ENCODE measurements at regions of chr17 and their contacts with region 1.

Region 1: GRCh38 chr17:48024937-48025906 is 12.4 kb downstream of the COPZ2 start:
- DNase-seq: peak; percentile 97
- ATAC-seq: peak; percentile 89
- H3K4me3 ChIP-seq: peak overlapping the region; percentile 40 to 76 (median 69)
- H3K4me3 Mint-ChIP-seq: peak overlapping the region; percentile 82
- H3K27ac ChIP-seq: peak overlapping the region; percentile 38 to 55
- H3K27ac Mint-ChIP-seq: peak overlapping the region; percentile 87
- H3K4me1 ChIP-seq: peaks cover 32 to 36% of the 10 kb centered on the region in 2 donors
- H3K4me1 Mint-ChIP-seq: peaks cover 35% of the 10 kb centered on the region
- H3K27me3 ChIP-seq: peaks cover 0 to 45% (median 15%) of the 10 kb centered on the region in 4 experiments
- H3K27me3 Mint-ChIP-seq: peaks cover 19% of the 10 kb centered on the region
- CTCF ChIP-seq: peak; percentile 68

Region 2: GRCh38 chr17:47895856-47896671 is 129.2 kb before region 1 on chr17 and contains the start of gene SP2:
- CTCF ChIA-PET with region 1: no interaction called
- POLR2A ChIA-PET with region 1: no interaction called
- intact Hi-C with region 1: loop called (anchors 1 kb)
- DNase-seq: peak; percentile 100
- ATAC-seq: peak; percentile 85
- H3K4me3 ChIP-seq: peak within 1 kb of the TSS; percentile 73 to 97 (median 90)
- H3K4me3 Mint-ChIP-seq: peak within 1 kb of the TSS; percentile 96
- H3K27ac ChIP-seq: peak within 1 kb of the TSS; percentile 94 to 98
- H3K27ac Mint-ChIP-seq: peak within 1 kb of the TSS; percentile 100
- H3K4me1 ChIP-seq: peaks cover 19 to 23% of the 10 kb centered on the region in 2 donors
- H3K4me1 Mint-ChIP-seq: peaks cover 50% of the 10 kb centered on the region
- H3K27me3 ChIP-seq: no peaks in the 10 kb centered on the region
- H3K27me3 Mint-ChIP-seq: no peaks in the 10 kb centered on the region
- CTCF ChIP-seq: no peak
- total RNA-seq, gene SP2: 32.5 and 35.4 TPM in 2 replicates

Region 3: DNA sequence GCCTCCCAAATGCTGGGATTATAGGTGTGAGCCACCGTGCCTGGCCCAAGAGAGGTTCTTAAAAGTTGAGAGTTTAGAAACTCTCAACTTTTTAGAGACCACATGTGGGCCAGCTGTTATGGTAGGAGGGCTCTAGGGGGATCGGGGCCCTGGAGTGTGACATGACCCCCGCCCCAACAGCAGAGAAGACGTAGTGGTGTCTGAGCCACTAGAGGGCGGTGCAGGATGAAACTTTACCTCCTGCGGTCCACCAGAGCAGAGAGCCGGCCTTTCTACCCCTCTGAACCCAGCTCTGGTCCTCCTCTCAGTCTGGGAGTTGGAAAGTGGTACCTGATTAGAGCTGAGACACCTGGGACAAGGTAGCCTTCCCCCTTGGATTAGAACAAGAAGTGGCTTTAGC is 46.9 kb before region 1 on chr17:
- CTCF ChIA-PET with region 1: interaction called, 5 read pairs
- POLR2A ChIA-PET with region 1: no interaction called
- intact Hi-C with region 1: loop called (anchors 2 kb)
- DNase-seq: peak; percentile 67
- ATAC-seq: peak; percentile 88
- H3K4me3 ChIP-seq: no peak overlapping the region
- H3K4me3 Mint-ChIP-seq: no peak overlapping the region
- H3K27ac ChIP-seq: no peak overlapping the region
- H3K27ac Mint-ChIP-seq: no peak overlapping the region
- H3K4me1 ChIP-seq: no peaks in the 10 kb centered on the region
- H3K4me1 Mint-ChIP-seq: peaks cover 2% of the 10 kb centered on the region
- H3K27me3 ChIP-seq: no peaks in the 10 kb centered on the region
- H3K27me3 Mint-ChIP-seq: no peaks in the 10 kb centered on the region
- CTCF ChIP-seq: peak; percentile 77

Region 4: DNA sequence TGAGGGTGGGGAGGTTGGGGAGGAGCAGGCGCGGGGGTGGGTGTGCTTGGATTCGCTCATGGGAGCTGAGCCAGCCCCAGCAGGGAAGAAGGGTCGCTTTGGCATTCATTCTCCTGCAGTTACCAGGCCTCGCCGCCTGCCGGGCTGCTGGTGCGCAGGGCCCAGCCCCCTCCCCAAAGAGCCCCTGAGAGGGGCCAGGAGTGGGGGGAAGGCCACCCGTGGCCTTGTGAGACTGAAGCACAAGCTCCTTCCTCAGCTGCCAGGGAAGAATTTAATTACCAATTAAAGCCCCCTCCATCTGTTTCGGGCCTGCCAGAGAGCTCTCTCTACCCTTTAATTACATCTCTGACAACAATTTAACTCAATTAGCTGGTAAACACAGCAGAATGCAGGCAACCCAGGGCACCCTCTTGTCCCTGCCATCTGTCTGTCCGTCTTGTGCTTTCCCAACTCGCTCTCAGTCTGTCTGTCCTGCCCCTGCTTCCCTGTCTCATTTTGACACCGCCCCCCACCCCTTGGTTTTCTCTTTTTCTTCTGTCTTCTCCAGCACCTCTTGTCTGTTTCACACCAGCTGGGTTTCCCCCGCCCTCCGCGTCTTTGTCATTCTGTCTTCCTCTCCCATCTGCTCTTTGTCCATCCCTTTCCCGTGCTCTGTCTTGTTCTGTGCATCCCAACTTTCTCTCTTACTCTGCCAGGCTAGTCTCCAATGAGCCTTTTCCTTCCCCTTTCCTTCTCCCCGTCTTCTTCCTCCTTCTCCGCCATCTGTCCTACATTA is 21.6 kb before region 1 on chr17:
- CTCF ChIA-PET with region 1: no interaction called
- POLR2A ChIA-PET with region 1: no interaction called
- intact Hi-C with region 1: no loop called
- DNase-seq: no peak
- ATAC-seq: no peak
- H3K4me3 ChIP-seq: no peak overlapping the region
- H3K4me3 Mint-ChIP-seq: no peak overlapping the region
- H3K27ac ChIP-seq: no peak overlapping the region
- H3K27ac Mint-ChIP-seq: no peak overlapping the region
- H3K4me1 ChIP-seq: no peaks in the 10 kb centered on the region
- H3K4me1 Mint-ChIP-seq: peaks cover 4% of the 10 kb centered on the region
- H3K27me3 ChIP-seq: peaks cover 0 to 6% (median under 1%) of the 10 kb centered on the region in 4 experiments
- H3K27me3 Mint-ChIP-seq: peaks cover 17% of the 10 kb centered on the region
- CTCF ChIP-seq: no peak

Region 5: GRCh38 chr17:48047741-48048383 is 22.6 kb after region 1 on chr17 and contains the start of gene NFE2L1:
- CTCF ChIA-PET with region 1: interaction called, 50 read pairs
- POLR2A ChIA-PET with region 1: interaction called, 16 read pairs
- intact Hi-C with region 1: loop called (anchors 1 kb)
- DNase-seq: peak; percentile 98
- ATAC-seq: peak; percentile 94
- H3K4me3 ChIP-seq: peak within 1 kb of the TSS; percentile 63 to 84 (median 78)
- H3K4me3 Mint-ChIP-seq: peak within 1 kb of the TSS; percentile 97
- H3K27ac ChIP-seq: peak within 1 kb of the TSS; percentile 87 to 90
- H3K27ac Mint-ChIP-seq: peak within 1 kb of the TSS; percentile 100
- H3K4me1 ChIP-seq: peaks cover 30 to 35% of the 10 kb centered on the region in 2 donors
- H3K4me1 Mint-ChIP-seq: peaks cover 52% of the 10 kb centered on the region
- H3K27me3 ChIP-seq: no peaks in the 10 kb centered on the region
- H3K27me3 Mint-ChIP-seq: no peaks in the 10 kb centered on the region
- CTCF ChIP-seq: no peak
- total RNA-seq, gene NFE2L1: 58.1 and 66.4 TPM in 2 replicates

Region 6: DNA sequence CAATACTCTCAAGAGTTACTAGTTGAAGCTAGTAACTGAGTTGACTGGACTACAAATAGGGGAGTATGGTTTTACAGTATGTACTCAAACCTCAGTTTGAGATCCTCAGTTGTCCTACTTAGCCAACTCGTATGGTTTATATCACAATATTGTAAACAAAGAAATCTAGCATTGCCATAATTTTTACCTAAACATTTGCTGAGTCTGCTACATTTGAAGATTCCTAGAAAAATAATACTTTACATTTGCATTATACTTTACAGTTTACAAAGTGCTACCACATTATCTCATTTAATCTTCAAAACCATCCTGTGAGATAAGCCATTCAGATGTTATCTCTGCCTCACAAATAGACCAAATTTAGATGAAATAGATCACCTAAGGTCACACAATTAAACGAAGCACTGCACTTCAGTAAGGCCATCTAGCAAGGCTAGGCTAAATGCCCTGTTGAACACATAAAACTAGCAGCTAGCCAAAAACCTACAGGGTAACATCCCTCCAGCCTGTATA is 59.8 kb after region 1 on chr17:
- CTCF ChIA-PET with region 1: interaction called, 228 read pairs
- POLR2A ChIA-PET with region 1: no interaction called
- intact Hi-C with region 1: no loop called
- DNase-seq: no peak
- ATAC-seq: no peak
- H3K4me3 ChIP-seq: no peak overlapping the region
- H3K4me3 Mint-ChIP-seq: no peak overlapping the region
- H3K27ac ChIP-seq: no peak overlapping the region
- H3K27ac Mint-ChIP-seq: no peak overlapping the region
- H3K4me1 ChIP-seq: no peaks in the 10 kb centered on the region
- H3K4me1 Mint-ChIP-seq: peaks cover 3% of the 10 kb centered on the region
- H3K27me3 ChIP-seq: no peaks in the 10 kb centered on the region
- H3K27me3 Mint-ChIP-seq: no peaks in the 10 kb centered on the region
- CTCF ChIP-seq: no peak

Region 7: GRCh38 chr17:48113201-48113676 is 88.0 kb after region 1 on chr17:
- CTCF ChIA-PET with region 1: interaction called, 24 read pairs
- POLR2A ChIA-PET with region 1: interaction called, 3 read pairs
- intact Hi-C with region 1: no loop called
- DNase-seq: peak; percentile 66
- ATAC-seq: no peak
- H3K4me3 ChIP-seq: peak overlapping the region in 4 of 5 experiments; percentile 1 to 32 (median 12)
- H3K4me3 Mint-ChIP-seq: peak overlapping the region; percentile 81
- H3K27ac ChIP-seq: peak overlapping the region; percentile 67 to 96
- H3K27ac Mint-ChIP-seq: peak overlapping the region; percentile 91
- H3K4me1 ChIP-seq: peaks cover 53 to 64% of the 10 kb centered on the region in 2 donors
- H3K4me1 Mint-ChIP-seq: peaks cover 45% of the 10 kb centered on the region
- H3K27me3 ChIP-seq: no peaks in the 10 kb centered on the region
- H3K27me3 Mint-ChIP-seq: no peaks in the 10 kb centered on the region
- CTCF ChIP-seq: no peak

Region 8: GRCh38 chr17:48351831-48352332 is 326.7 kb after region 1 on chr17:
- CTCF ChIA-PET with region 1: no interaction called
- POLR2A ChIA-PET with region 1: no interaction called
- intact Hi-C with region 1: no loop called
- DNase-seq: peak; percentile 65
- ATAC-seq: peak; percentile 28
- H3K4me3 ChIP-seq: no peak overlapping the region
- H3K4me3 Mint-ChIP-seq: no peak overlapping the region
- H3K27ac ChIP-seq: no peak overlapping the region
- H3K27ac Mint-ChIP-seq: no peak overlapping the region
- H3K4me1 ChIP-seq: peaks cover 3% of the 10 kb centered on the region in 2 donors
- H3K4me1 Mint-ChIP-seq: peaks cover 4% of the 10 kb centered on the region
- H3K27me3 ChIP-seq: no peaks in the 10 kb centered on the region
- H3K27me3 Mint-ChIP-seq: no peaks in the 10 kb centered on the region
- CTCF ChIP-seq: peak; percentile 95

Region 9: DNA sequence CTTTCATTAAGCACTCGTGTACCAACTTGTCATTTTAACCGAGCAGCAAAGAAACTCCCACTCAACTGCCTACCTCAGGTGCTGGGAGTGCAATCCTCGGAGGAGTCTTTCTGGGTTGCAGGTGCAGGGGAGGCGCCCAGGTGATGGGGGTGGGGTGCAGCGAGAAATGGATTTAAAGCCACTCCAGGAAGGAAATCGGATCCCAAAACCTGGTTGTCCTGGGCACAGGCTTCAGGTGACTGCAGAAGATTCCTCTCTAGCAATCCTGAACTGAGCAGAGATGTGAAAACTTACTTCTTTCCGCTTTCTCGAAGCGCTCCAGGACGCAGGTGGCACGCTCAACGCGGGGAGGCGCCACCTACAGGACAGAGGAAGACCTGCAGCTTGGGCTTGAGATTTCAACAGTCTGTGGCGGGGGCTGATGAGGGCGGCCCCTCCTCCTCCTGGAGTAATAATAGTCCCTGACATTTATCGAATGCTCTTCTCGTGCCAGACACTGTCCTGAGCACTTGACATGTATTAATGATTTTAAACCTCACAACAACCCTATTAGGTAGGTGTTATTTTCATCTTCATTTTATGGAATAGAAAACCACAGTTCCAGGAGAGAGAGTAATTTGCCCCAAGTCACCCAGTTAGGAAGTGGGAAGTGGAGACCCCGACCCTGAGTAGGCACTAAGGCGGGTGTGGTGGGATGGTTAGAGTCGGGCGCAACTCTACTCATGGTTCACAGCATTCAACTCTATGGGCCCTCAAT is 432.0 kb after region 1 on chr17:
- CTCF ChIA-PET with region 1: no interaction called
- POLR2A ChIA-PET with region 1: no interaction called
- intact Hi-C with region 1: loop called (anchors 10 kb)
- DNase-seq: peak; percentile 89
- ATAC-seq: peak; percentile 96
- H3K4me3 ChIP-seq: peak overlapping the region in 1 of 5 experiments; percentile 20
- H3K4me3 Mint-ChIP-seq: peak overlapping the region; percentile 17
- H3K27ac ChIP-seq: no peak overlapping the region
- H3K27ac Mint-ChIP-seq: peak overlapping the region; percentile 15
- H3K4me1 ChIP-seq: peaks cover 35 to 41% of the 10 kb centered on the region in 2 donors
- H3K4me1 Mint-ChIP-seq: peaks cover 39% of the 10 kb centered on the region
- H3K27me3 ChIP-seq: peaks cover 0 to 8% (median 0%) of the 10 kb centered on the region in 4 experiments
- H3K27me3 Mint-ChIP-seq: peaks cover 8% of the 10 kb centered on the region
- CTCF ChIP-seq: peak; percentile 98

Measured in B cell (primary cell).